ENCODE measurements at regions of chr6 and their contacts with region 1.

Region 1: DNA sequence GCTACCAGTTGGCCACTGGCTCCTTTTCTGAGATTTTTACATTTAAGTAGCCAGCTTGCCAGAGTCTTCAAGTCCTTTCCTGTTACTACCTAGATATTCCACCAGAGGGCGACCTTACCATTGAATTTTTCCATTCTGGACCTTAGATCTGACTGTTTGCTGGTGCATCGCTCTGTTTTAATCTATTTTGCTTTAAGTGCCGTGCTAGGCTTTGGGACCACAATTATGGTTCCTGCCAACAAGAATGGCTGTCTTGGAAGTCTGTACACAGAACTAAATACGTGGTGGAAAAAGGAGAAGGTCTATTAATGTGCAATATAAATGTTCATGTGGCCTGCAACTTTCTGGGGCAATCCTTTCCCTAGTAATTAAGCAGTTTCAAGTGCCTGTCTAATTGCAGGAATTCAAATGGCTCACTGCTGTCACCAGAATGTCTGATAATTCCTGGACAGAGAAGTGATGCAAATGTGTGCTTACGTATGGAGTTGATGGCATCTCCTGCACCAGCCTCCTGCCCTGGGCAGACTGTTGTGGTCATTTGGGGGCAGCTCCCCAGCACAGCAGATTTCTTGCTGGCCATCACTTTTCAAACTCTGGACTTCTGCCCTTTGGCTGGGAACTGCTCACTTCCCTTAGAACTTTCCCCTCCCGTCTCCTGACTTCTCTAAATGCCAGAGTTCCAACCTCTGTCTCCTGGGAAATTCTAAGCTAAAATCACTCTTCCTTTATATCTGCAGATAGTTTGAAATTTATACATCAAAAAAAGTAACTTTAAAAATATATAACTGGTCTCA is 5.6 kb upstream of the HLA-DOA start:
- DNase-seq: peak in 1 of 2 donors; percentile 82
- ATAC-seq: peak; percentile 41 to 75 (median 63)
- H3K4me3 ChIP-seq: peak overlapping the region in 2 of 10 donors; percentile 4
- H3K27ac ChIP-seq: peak overlapping the region in 8 of 10 donors; percentile 34 to 70 (median 56)
- H3K4me1 ChIP-seq: peaks cover 0 to 57% (median 42%) of the 10 kb centered on the region in 9 donors
- H3K27me3 ChIP-seq: peaks cover 0 to 28% (median 9%) of the 10 kb centered on the region in 7 donors
- CTCF ChIP-seq: peak; percentile 65 to 89 (median 84)

Region 2: DNA sequence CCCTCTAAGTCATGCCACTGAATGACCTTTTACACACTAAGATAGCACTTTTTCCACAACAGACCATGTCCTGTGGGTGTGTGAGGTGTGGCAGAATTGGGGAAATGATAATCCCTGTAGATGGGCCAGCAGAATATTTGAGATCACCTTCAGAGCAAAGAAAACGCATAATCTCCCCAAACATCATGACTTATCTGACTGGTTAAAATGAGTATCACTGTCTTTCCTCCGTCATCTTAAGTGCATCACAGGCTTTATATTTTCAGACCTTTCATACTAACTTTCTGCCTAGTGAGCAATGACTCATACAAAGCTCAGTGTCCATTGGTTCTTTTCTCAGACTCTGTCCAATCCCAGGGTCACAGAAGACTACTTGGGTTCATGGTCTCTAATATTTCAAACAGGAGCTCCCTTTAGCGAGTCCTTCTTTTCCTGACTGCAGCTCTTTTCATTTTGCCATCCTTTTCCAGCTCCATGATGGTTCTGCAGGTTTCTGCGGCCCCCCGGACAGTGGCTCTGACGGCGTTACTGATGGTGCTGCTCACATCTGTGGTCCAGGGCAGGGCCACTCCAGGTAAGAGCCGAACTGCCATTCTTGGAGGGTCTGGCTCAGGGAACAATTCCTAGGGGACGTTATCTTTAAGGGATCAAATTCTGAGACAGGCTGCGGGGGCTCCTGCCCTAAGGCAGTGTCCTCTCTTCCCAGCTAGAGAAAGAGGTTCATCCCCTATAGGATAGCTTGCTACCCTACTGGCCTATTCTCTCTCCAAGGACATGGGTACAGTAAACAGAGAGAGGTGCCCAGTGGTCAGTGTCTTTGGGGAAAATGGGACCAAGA is 60.7 kb after region 1 on chr6 and contains the start of gene HLA-DPB1:
- intact Hi-C with region 1: loop called in 7 of 10 experiments (anchors 2 to 5 kb)
- DNase-seq: peak in 1 of 2 donors; percentile 50
- ATAC-seq: peak; percentile 74 to 87 (median 80)
- H3K4me3 ChIP-seq: peak within 1 kb of the TSS in 9 of 10 donors; percentile 33 to 71 (median 57)
- H3K27ac ChIP-seq: peak within 1 kb of the TSS; percentile 19 to 96 (median 82)
- H3K4me1 ChIP-seq: peaks cover 0 to 82% (median under 1%) of the 10 kb centered on the region in 9 donors
- H3K27me3 ChIP-seq: peaks cover 0 to 3% (median 0%) of the 10 kb centered on the region in 7 donors
- CTCF ChIP-seq: no peak
- total RNA-seq, gene HLA-DPB1: 19.2 to 264 (median 34.8) TPM

Region 3: DNA sequence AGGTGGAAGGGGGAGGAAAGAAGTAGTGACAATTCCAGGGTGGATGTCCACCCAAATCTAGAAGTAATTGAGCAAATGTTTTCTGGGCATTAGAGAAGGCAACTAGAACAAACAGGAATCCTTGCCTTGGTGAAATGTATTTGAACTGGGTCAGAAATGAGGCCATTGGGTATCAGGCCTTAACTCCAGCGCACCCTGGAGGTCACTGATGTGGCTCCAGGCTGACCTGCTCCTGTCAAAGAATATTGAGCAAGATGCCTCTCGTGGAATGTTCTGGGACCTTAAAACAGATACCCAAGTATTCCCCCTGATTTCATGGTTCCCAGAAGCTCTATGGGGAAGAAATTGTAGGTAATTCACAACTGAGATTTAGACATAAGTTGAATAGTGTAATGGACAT is 67.7 kb after region 1 on chr6:
- intact Hi-C with region 1: loop called in 9 of 10 experiments (anchors 2 to 5 kb)
- DNase-seq: no peak
- ATAC-seq: peak in 5 of 8 donors; percentile 49 to 73 (median 58)
- H3K4me3 ChIP-seq: no peak overlapping the region
- H3K27ac ChIP-seq: peak overlapping the region in 1 of 10 donors; percentile 36
- H3K4me1 ChIP-seq: peaks cover 0 to 41% (median 13%) of the 10 kb centered on the region in 9 donors
- H3K27me3 ChIP-seq: peaks cover 0 to 1% (median 0%) of the 10 kb centered on the region in 7 donors
- CTCF ChIP-seq: peak in 8 of 9 donors; percentile 15 to 75 (median 52)

Region 4: DNA sequence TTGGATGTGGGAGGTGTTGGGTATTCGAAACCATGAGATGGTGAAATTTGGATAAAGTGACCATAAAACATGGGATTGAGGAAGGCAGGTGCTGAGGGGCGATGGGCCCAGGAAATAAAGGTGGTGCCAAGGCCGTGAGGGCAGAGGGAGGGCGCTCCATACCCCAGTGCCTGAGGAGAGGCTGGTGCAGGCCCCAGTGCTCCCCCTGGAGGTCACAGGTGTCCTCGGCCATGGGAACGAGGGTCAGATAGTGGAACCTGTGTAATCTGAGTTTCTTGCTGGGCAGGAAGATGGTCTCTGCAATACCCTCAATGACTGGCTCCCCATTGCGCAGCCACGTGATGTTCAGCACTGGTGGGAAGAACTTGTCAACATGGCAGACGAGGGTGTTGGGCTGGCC is 76.9 kb after region 1 on chr6:
- intact Hi-C with region 1: loop called in 2 of 10 experiments (anchors 2 kb)
- DNase-seq: peak in 1 of 2 donors; percentile 43
- ATAC-seq: peak in 5 of 8 donors; percentile 51 to 74 (median 55)
- H3K4me3 ChIP-seq: no peak overlapping the region
- H3K27ac ChIP-seq: no peak overlapping the region
- H3K4me1 ChIP-seq: no peaks in the 10 kb centered on the region
- H3K27me3 ChIP-seq: peaks cover 0 to 13% (median 0%) of the 10 kb centered on the region in 7 donors
- CTCF ChIP-seq: peak in 8 of 9 donors; percentile 19 to 73 (median 61)

Region 5: DNA sequence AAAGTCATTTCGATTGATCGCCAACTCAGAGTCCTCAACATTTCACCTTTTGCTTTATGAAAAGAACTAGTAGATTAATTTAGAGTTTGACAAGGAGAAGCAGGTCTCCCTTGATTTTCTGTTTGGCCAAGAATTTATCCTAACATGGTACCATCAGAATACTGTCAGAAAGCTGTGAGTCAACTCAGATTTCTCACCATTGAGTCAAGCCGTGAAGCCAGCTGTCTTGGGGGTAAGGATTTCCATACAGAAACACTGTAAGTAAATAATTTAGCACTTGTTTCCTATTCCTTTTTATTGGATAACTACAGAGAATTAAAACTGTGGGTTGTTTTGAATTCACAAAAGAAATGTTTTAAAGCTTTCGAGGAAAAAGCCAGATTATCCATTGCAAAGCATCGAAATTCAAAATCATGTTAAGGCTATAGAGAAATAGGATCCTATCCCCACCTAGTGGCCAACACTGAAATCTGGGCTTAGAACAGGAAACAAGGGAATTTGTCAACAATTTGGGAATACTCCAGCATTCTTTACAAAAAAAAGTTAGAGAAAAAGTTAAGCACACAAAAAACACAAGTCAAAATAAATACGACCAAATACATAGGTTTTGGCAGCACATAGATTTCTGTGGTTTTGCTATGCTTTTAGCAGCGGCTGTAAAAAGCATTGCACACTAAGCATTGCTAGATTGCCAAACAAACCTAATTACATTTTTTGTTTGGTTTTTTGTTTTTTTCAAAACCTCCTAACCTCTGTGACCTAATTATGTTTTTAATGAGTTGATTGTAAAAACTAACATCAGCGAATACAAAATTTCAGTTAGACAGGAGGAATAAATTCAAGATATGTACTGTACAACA is 133.0 kb after region 1 on chr6:
- intact Hi-C with region 1: loop called in 5 of 10 experiments (anchors 2 to 10 kb)
- DNase-seq: no peak
- ATAC-seq: no peak
- H3K4me3 ChIP-seq: no peak overlapping the region
- H3K27ac ChIP-seq: no peak overlapping the region
- H3K4me1 ChIP-seq: peaks cover 0 to 15% (median 0%) of the 10 kb centered on the region in 9 donors
- H3K27me3 ChIP-seq: peaks cover 0 to 25% (median 17%) of the 10 kb centered on the region in 7 donors
- CTCF ChIP-seq: peak; percentile 43 to 87 (median 82)

Measured in heart right ventricle (tissue), 16 donors.